ENCODE measurements at regions of chr2 and their contacts with region 1.

Region 1: DNA sequence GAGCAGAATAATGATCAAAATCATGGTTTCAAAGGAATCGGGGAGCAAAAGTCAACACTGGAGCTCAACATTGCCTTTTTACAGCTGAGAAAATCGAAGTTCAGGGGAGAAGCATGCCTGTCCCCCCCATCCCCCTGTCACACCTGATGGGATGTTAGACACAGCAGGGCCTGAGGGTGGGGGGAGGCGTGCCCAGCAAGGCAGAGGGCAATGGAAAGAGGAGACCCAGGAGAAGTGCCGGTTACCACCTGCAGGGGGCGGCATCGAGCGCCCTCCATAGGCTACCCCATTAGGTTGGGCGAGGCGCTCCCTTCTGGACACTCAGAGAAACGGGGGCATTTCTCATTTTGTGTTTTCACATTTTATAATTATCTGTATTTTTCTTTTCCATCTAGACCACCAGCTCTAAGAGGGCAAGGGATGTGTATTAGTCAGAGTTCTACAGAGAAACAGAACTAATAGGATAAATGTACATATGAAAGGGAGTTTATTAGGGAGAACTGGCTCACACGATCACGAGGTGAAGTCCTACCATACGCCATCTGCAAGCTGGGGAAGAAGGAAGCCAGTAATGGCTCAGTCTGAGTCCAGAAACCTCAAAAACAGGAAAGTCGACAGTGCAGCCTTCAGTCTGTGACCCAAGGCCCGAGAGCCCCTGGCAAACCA is 271.3 kb downstream of the LRATD1 start:
- DNase-seq: peak; percentile 55
- H3K4me3 Mint-ChIP-seq: no peak overlapping the region
- H3K27ac Mint-ChIP-seq: no peak overlapping the region
- H3K4me1 Mint-ChIP-seq: no peaks in the 10 kb centered on the region
- H3K27me3 Mint-ChIP-seq: no peaks in the 10 kb centered on the region

Region 2: GRCh38 chr2:14401873-14402272 is 502.0 kb before region 1 on chr2:
- intact Hi-C with region 1: no loop called
- DNase-seq: no peak
- H3K4me3 Mint-ChIP-seq: no peak overlapping the region
- H3K27ac Mint-ChIP-seq: no peak overlapping the region
- H3K4me1 Mint-ChIP-seq: no peaks in the 10 kb centered on the region
- H3K27me3 Mint-ChIP-seq: no peaks in the 10 kb centered on the region

Region 3: GRCh38 chr2:14960686-14961324 is 57.0 kb after region 1 on chr2:
- intact Hi-C with region 1: no loop called
- DNase-seq: no peak
- H3K4me3 Mint-ChIP-seq: no peak overlapping the region
- H3K27ac Mint-ChIP-seq: no peak overlapping the region
- H3K4me1 Mint-ChIP-seq: no peaks in the 10 kb centered on the region
- H3K27me3 Mint-ChIP-seq: peaks cover under 1% of the 10 kb centered on the region

Region 4: DNA sequence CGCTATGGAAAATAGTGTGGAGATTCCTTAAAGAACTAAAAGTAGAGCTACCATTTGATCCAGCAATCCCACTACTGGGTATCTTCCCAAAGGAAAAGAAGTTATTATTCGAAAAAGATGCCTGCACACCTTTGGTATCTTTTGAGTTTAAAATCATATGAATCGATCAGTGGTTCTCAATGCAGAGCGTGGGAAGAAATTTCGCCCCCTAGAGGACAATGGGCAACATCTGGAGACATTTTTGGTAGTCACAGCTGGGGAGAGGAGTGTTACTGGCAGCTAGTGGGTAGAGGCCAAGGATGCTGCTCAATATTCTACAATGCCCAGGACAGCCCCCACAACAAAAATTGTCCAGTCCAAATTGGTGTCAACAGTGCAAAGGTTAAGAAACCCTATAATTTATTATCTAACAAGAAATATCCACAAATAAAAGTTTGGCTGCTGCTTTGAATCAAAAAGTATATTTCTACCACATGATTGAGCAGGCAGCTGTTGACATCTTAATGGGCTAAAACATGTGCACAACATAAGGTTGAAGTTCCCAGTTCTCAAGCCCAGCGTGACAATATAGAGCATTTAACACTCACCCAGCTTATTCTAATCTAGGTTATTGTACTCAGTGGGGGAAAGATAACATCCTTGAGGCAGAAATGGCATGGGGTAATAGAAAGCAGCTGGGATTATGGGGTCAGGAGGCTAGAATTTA is 154.3 kb after region 1 on chr2:
- intact Hi-C with region 1: loop called (anchors 10 kb)
- DNase-seq: no peak
- H3K4me3 Mint-ChIP-seq: no peak overlapping the region
- H3K27ac Mint-ChIP-seq: no peak overlapping the region
- H3K4me1 Mint-ChIP-seq: no peaks in the 10 kb centered on the region
- H3K27me3 Mint-ChIP-seq: peaks cover 8% of the 10 kb centered on the region

Region 5: DNA sequence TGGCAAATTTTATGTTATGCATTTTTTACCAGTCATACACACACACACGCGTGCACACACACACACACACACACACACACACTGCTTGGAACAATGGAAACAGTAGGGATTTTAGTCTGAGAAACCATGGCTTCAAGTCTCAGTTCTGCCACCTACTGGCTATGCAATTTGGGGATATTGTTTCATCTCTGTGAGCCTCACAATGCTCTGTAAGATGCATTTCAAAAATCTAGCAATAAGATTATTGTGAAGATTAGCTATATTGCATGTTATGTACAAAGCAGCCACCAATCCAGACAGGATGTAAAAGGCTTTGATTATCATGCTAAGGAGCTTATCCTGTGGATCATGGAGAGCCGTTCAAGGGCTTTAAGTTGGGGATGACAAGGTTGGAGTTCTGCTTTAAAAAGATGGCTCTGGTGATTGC is 255.9 kb after region 1 on chr2:
- intact Hi-C with region 1: loop called (anchors 5 kb)
- DNase-seq: no peak
- H3K4me3 Mint-ChIP-seq: no peak overlapping the region
- H3K27ac Mint-ChIP-seq: no peak overlapping the region
- H3K4me1 Mint-ChIP-seq: peaks cover 11% of the 10 kb centered on the region
- H3K27me3 Mint-ChIP-seq: peaks cover 26% of the 10 kb centered on the region